ENCODE measurements at regions of chr11 and their contacts with region 1.

Region 1: GRCh38 chr11:18853086-18853720 is 61.6 kb upstream of the PTPN5 start:
- DNase-seq: peak; percentile 11
- H3K4me3 ChIP-seq: no peak overlapping the region
- H3K27ac ChIP-seq: no peak overlapping the region
- H3K4me1 ChIP-seq: no peaks in the 10 kb centered on the region
- H3K27me3 ChIP-seq: peaks cover 12% of the 10 kb centered on the region
- CTCF ChIP-seq: peak; percentile 53

Region 2: GRCh38 chr11:18731949-18732821 is 121.0 kb before region 1 on chr11:
- CTCF ChIA-PET with region 1: no interaction called
- POLR2A ChIA-PET with region 1: no interaction called
- intact Hi-C with region 1: no loop called
- DNase-seq: peak; percentile 52
- H3K4me3 ChIP-seq: no peak overlapping the region
- H3K27ac ChIP-seq: no peak overlapping the region
- H3K4me1 ChIP-seq: no peaks in the 10 kb centered on the region
- H3K27me3 ChIP-seq: no peaks in the 10 kb centered on the region
- CTCF ChIP-seq: peak; percentile 88

Region 3: DNA sequence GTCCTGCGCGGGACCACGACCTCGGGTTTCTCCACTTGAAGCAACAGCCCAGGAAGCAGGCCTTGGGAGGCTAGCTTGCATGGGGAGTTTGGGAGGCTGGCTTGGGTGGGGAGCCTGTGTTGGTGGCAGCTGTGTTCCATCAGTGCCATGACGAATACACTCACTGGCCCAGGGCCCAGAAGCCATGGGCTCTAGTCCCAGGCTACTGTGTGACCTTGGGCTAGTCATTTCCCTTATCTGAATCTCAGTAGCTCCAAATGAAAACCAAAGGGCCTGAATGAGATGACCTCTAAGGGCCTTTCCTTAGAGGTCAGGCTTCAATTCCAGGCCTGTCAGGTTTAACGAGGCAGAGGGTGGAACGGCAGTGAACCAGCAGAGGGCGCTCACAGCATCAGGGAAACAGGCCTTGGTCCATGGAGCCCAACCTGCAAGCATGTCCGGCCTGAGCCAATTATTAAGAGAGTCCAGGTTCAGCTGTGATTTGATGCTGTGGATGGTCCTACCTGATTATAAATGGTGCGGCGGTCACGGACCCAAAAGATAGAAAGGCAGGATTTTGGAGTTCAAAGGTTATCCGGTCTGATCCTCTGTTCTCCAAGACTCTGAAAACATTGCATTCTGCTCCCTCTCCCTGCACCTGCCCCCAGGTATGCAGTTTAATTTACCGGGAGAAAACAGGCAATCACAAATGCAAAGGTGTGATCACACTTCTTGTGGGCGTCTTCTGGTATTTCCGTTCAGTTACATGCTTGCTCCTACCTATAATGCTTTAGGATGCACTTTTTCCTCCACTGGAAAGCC is 77.5 kb before region 1 on chr11:
- CTCF ChIA-PET with region 1: no interaction called
- POLR2A ChIA-PET with region 1: no interaction called
- intact Hi-C with region 1: loop called (anchors 5 kb)
- DNase-seq: peak; percentile 55
- H3K4me3 ChIP-seq: no peak overlapping the region
- H3K27ac ChIP-seq: no peak overlapping the region
- H3K4me1 ChIP-seq: no peaks in the 10 kb centered on the region
- H3K27me3 ChIP-seq: no peaks in the 10 kb centered on the region
- CTCF ChIP-seq: peak; percentile 83

Measured in A673 (cell line).